ENCODE measurements at regions of chr4 and their contacts with region 1.

Region 1: GRCh38 chr4:617644-618641 is 7.4 kb upstream of the PDE6B start:
- DNase-seq: peak; percentile 78 to 88
- H3K4me3 ChIP-seq: no peak overlapping the region
- H3K27ac ChIP-seq: no peak overlapping the region
- H3K4me1 ChIP-seq: peaks cover 9% of the 10 kb centered on the region
- H3K27me3 ChIP-seq: peaks cover 71% of the 10 kb centered on the region
- CTCF ChIP-seq: no peak

Region 2: GRCh38 chr4:646460-646859 is 28.5 kb after region 1 on chr4:
- CTCF ChIA-PET with region 1: interaction called, 11 read pairs
- POLR2A ChIA-PET with region 1: no interaction called
- intact Hi-C with region 1: no loop called
- DNase-seq: no peak
- H3K4me3 ChIP-seq: no peak overlapping the region
- H3K27ac ChIP-seq: no peak overlapping the region
- H3K4me1 ChIP-seq: no peaks in the 10 kb centered on the region
- H3K27me3 ChIP-seq: peaks cover 80% of the 10 kb centered on the region
- CTCF ChIP-seq: no peak

Measured in PC-9 (cell line).